Heart right ventricle (tissue), 16 donors: ENCODE measurements at regions of chrX and their contacts with region 1.

Region 1: GRCh38 chrX:70030301-70030767 is 19.4 kb downstream of the AWAT2 start:
- DNase-seq: peak; percentile 11 to 46
- ATAC-seq: peak in 7 of 8 donors; percentile 44 to 74 (median 68)
- H3K4me3 ChIP-seq: no peak overlapping the region
- H3K27ac ChIP-seq: no peak overlapping the region
- H3K4me1 ChIP-seq: peaks cover 0 to 16% (median 0%) of the 10 kb centered on the region in 9 donors
- H3K27me3 ChIP-seq: peaks cover 0 to 48% (median 0%) of the 10 kb centered on the region in 7 donors
- CTCF ChIP-seq: peak; percentile 46 to 79 (median 69)

Region 2: DNA sequence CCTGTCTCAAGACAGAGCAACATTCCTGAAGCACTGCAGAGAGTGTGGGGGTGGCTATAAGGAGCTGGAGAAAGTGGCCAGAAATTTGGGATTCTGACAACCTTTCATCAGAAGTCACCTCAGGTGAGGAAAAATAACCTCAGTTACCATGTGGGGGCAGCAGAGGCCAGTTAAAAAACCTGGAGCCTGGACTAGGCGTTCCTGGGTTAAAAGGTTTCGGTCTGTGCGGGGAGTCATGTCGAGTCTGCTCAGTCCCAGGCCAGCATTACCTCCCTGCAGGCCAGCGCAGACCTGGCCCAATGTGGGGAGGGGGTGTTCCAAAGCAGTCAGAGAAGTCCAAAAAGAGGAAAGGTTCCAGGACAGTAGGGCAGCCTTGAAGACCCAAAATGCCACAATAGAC is 537.1 kb before region 1 on chrX:
- intact Hi-C with region 1: loop called in 5 of 10 experiments (anchors 5 kb)
- DNase-seq: peak; percentile 6 to 14
- ATAC-seq: peak in 7 of 8 donors; percentile 38 to 63 (median 49)
- H3K4me3 ChIP-seq: no peak overlapping the region
- H3K27ac ChIP-seq: no peak overlapping the region
- H3K4me1 ChIP-seq: no peaks in the 10 kb centered on the region
- H3K27me3 ChIP-seq: peaks cover 0 to 67% (median 0%) of the 10 kb centered on the region in 7 donors
- CTCF ChIP-seq: peak in 8 of 9 donors; percentile 10 to 54 (median 46)

Region 3: DNA sequence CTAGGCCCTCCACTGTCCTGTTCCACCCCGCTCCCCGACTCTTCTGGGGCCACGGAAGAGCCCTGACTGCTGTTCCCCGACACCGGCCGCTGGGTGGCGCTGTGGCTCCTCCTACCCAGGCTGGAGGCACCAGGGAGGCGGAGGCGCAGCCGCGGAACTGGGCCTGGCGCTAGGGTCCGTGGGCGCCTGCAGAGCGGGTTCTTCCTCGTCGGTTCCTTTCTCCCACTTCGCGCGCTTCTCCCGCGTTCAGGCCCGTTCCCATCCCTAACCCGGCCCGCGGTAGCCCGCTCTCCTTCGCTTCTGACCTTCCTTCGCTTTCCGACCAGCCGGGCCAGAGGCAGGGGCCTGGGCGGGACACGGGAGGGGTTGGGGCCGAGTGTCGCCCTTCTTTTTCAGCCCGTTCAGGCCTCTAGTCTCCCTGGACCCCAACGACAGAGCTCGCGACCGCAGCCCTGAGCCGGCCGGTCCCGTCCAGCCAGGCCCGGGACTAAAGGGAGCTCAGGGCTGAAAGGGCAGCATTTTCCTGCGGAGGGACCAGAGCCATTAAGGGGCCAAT is 491.9 kb before region 1 on chrX:
- intact Hi-C with region 1: loop called in 9 of 10 experiments (anchors 2 to 10 kb)
- DNase-seq: peak; percentile 70 to 83
- ATAC-seq: peak; percentile 95 to 99 (median 96)
- H3K4me3 ChIP-seq: peak overlapping the region in 9 of 10 donors; percentile 27 to 59 (median 54)
- H3K27ac ChIP-seq: peak overlapping the region in 4 of 10 donors; percentile 52 to 71 (median 54)
- H3K4me1 ChIP-seq: peaks cover 0 to 17% (median 3%) of the 10 kb centered on the region in 9 donors
- H3K27me3 ChIP-seq: peaks cover 0 to 34% (median 0%) of the 10 kb centered on the region in 7 donors
- CTCF ChIP-seq: peak; percentile 60 to 83 (median 77)

Region 4: DNA sequence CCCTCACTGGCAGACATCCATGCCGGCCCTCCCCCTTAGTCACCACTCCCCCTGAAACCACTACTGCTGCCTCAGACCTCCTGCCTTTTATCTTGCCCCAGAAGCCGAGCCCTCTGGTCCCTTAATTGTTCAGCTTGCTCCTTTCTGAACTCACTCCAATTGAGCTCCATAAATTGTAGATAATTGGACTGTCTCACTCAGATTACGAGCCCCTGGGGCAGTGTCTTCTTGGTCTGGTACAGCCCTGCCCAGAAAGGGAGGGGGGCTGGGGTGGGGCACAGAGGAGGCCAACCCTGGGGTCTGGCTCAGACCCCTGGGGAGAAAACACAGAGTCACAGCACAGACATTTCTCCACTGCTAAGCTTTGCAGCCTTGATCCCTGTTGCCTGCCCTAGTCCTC is 486.8 kb before region 1 on chrX:
- intact Hi-C with region 1: loop called in 9 of 10 experiments (anchors 2 to 10 kb)
- DNase-seq: no peak
- ATAC-seq: no peak
- H3K4me3 ChIP-seq: no peak overlapping the region
- H3K27ac ChIP-seq: no peak overlapping the region
- H3K4me1 ChIP-seq: peaks cover 0 to 15% (median 3%) of the 10 kb centered on the region in 9 donors
- H3K27me3 ChIP-seq: peaks cover 0 to 35% (median 0%) of the 10 kb centered on the region in 7 donors
- CTCF ChIP-seq: no peak

Region 5: GRCh38 chrX:69968950-69969349 is 61.4 kb before region 1 on chrX:
- intact Hi-C with region 1: no loop called
- DNase-seq: no peak
- ATAC-seq: no peak
- H3K4me3 ChIP-seq: no peak overlapping the region
- H3K27ac ChIP-seq: no peak overlapping the region
- H3K4me1 ChIP-seq: no peaks in the 10 kb centered on the region
- H3K27me3 ChIP-seq: peaks cover 0 to 13% (median 0%) of the 10 kb centered on the region in 7 donors
- CTCF ChIP-seq: no peak